Posterior cingulate gyrus (tissue), 11 donors: ENCODE measurements at regions of chr18 and their contacts with region 1.

Region 1: GRCh38 chr18:13235981-13236380 is 17.4 kb downstream of the LDLRAD4 start:
- DNase-seq: peak in 8 of 10 donors; percentile 49 to 94 (median 75)

Region 2: GRCh38 chr18:13289481-13290205 is 53.7 kb after region 1 on chr18:
- intact Hi-C with region 1: loop called (anchors 10 kb)
- DNase-seq: no peak